Heart left ventricle (tissue), 16 donors: ENCODE measurements at regions of chr20 and their contacts with region 1.

Region 1: GRCh38 chr20:57440678-57441520 is 49.7 kb downstream of the RBM38 start:
- DNase-seq: peak; percentile 84 to 95 (median 89)
- ATAC-seq: peak; percentile 82 to 91 (median 89)
- H3K4me3 ChIP-seq: peak overlapping the region in 1 of 12 donors; percentile 2
- H3K27ac ChIP-seq: peak overlapping the region; percentile 66 to 96 (median 88)
- H3K4me1 ChIP-seq: peaks cover 0 to 60% (median 29%) of the 10 kb centered on the region in 12 donors
- H3K27me3 ChIP-seq: no peaks in the 10 kb centered on the region
- CTCF ChIP-seq: no peak
- POLR2A ChIP-seq: peak in 1 of 2 donors; percentile 33

Region 2: DNA sequence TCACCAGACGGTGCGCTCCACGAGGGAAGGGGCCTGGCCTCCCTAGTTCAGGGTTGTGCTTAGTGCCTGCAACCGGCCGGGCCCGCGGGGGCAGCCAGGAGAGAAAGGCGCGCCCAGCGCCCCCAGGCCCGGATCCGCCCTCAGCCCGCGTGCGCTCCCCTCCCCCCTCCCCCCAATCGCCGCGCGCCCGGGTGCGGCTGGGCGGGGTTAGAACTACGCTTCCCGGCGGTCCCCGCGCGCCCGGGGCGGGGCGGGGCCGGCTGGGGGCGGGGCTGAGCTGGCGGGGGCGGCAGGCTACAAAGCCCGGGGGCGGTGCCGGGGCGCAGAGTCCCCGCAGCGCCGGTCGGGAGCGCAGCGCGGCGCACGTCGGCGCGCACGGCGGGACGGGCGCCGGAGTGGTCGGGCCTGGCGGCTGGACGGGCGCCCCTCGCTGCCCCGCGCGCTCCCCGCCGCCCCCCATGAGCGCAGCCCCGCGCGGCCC is 49.8 kb before region 1 on chr20 and contains the start of gene RBM38:
- intact Hi-C with region 1: loop called in 9 of 10 experiments (anchors 2 to 5 kb)
- DNase-seq: peak; percentile 66 to 89 (median 75)
- ATAC-seq: peak; percentile 24 to 77 (median 62)
- H3K4me3 ChIP-seq: peak within 1 kb of the TSS; percentile 63 to 94 (median 75)
- H3K27ac ChIP-seq: peak within 1 kb of the TSS; percentile 80 to 97 (median 90)
- H3K4me1 ChIP-seq: peaks cover 10 to 70% (median 51%) of the 10 kb centered on the region in 12 donors
- H3K27me3 ChIP-seq: no peaks in the 10 kb centered on the region
- CTCF ChIP-seq: no peak
- POLR2A ChIP-seq: no peak
- total RNA-seq, gene RBM38: 45.6 to 97.9 (median 62.3) TPM

Region 3: DNA sequence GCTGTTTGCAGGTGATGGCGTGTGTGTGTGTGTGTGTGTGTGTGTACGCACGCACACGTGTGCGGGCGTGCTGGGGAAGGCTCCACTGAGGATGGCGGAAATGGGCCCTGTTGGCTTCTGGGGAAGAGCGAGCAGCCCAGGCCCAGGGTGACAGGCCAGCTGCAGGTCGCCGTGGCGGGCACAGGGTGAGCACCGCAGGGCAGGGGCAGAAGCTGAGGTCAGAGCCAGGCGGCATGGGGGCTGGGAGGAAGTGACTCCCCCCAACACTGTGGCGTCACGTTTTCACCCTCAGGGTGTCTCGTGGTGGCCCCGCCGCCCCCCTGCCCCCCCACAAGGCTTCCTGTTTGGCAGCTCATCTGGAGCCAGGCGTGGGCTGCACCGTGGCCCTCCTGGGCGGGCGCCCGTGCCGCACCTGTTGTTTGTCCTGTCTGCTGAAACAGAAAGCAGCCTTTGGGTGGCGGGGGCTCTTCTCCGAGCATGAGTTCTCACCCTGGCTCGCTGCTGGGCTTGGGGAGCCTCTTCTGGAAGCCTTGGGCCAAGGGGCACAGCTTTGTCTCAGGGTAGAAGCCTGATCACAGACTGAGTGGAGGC is 42.6 kb before region 1 on chr20:
- intact Hi-C with region 1: loop called in 9 of 10 experiments (anchors 2 to 5 kb)
- DNase-seq: peak; percentile 52 to 80 (median 64)
- ATAC-seq: peak in 3 of 4 donors; percentile 1 to 37 (median 2)
- H3K4me3 ChIP-seq: peak overlapping the region in 4 of 12 donors; percentile 1 to 30 (median 19)
- H3K27ac ChIP-seq: peak overlapping the region in 10 of 12 donors; percentile 35 to 97 (median 54)
- H3K4me1 ChIP-seq: peaks cover 26 to 98% (median 74%) of the 10 kb centered on the region in 12 donors
- H3K27me3 ChIP-seq: no peaks in the 10 kb centered on the region
- CTCF ChIP-seq: no peak
- POLR2A ChIP-seq: no peak

Region 4: DNA sequence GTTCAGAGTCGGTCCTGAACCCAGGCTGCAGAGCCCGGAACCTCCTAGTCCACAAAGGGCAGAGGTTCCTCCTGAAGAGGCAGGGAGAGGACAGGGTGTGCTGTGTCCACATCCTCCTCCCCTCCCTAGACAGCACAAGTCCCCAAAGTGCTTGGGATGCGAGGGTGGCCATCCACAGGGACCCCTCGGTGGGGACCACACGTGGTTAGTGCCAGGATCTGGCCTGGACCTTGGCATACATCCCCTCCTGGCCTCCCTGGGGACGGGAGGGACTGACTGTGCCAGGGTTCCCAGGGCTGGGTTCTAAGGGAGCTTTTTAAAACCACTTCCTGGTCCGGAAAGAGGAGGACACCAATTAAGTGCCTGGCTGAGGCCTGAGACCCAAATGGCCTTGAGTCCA is 20.8 kb after region 1 on chr20:
- intact Hi-C with region 1: loop called in 1 of 10 experiments (anchors 2 kb)
- DNase-seq: no peak
- ATAC-seq: no peak
- H3K4me3 ChIP-seq: no peak overlapping the region
- H3K27ac ChIP-seq: peak overlapping the region in 6 of 12 donors; percentile 14 to 62 (median 55)
- H3K4me1 ChIP-seq: peaks cover 0 to 60% (median 9%) of the 10 kb centered on the region in 12 donors
- H3K27me3 ChIP-seq: peaks cover 0 to 3% (median 0%) of the 10 kb centered on the region in 9 donors
- CTCF ChIP-seq: no peak
- POLR2A ChIP-seq: no peak

Region 5: GRCh38 chr20:57473246-57474048 is 32.5 kb after region 1 on chr20:
- intact Hi-C with region 1: loop called in 2 of 10 experiments (anchors 2 to 5 kb)
- DNase-seq: peak in 1 of 5 donors; percentile 65
- ATAC-seq: peak in 2 of 4 donors; percentile 21 to 40
- H3K4me3 ChIP-seq: no peak overlapping the region
- H3K27ac ChIP-seq: peak overlapping the region in 1 of 12 donors; percentile 67
- H3K4me1 ChIP-seq: peaks cover 0 to 36% (median 10%) of the 10 kb centered on the region in 12 donors
- H3K27me3 ChIP-seq: peaks cover 0 to 14% (median 0%) of the 10 kb centered on the region in 9 donors
- CTCF ChIP-seq: peak in 1 of 12 donors; percentile 6
- POLR2A ChIP-seq: no peak

Region 6: GRCh38 chr20:57928181-57928580 is 487.3 kb after region 1 on chr20:
- intact Hi-C with region 1: no loop called
- DNase-seq: no peak
- ATAC-seq: peak in 1 of 4 donors; percentile 34
- H3K4me3 ChIP-seq: no peak overlapping the region
- H3K27ac ChIP-seq: no peak overlapping the region
- H3K4me1 ChIP-seq: peaks cover 0 to 2% (median 0%) of the 10 kb centered on the region in 12 donors
- H3K27me3 ChIP-seq: no peaks in the 10 kb centered on the region
- CTCF ChIP-seq: no peak
- POLR2A ChIP-seq: no peak